Aorta (tissue), 5 donors: ENCODE measurements at regions of chr6 and their contacts with region 1.

Region 1: DNA sequence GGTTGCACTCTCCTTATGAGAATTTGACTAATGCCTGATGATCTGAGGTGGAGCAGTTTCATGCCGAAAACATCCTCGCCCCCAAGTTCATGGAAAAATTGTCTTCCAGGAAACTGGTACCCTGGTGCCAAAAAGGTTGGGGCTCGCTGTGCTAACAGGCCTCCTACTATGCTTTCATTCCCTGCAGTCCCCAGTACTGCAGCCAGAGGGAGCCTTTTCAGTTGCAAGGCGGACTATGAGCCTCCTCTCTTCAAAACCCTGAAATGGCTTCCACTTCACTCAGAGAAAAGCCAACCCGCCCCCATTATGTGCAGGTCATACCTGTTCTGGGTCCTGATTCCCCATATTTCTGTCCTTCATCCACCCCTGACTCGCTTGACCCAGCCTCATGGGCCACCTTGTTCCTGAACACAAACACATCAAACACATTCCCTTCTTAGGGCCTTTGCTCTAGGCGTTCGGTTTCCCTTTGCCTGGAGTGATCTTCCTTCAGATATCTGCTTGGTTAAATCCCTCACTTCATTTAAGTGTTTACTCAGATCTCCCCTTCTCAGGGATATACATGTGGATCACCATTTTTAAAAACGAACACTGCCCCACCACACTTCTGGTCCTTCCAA is 173.7 kb downstream of the PHACTR1 start:
- DNase-seq: no peak
- ATAC-seq: no peak
- H3K4me3 ChIP-seq: no peak overlapping the region
- H3K27ac ChIP-seq: no peak overlapping the region
- H3K4me1 ChIP-seq: no peaks in the 10 kb centered on the region
- H3K27me3 ChIP-seq: peaks cover 0 to 3% of the 10 kb centered on the region in 2 donors

Region 2: GRCh38 chr6:12637960-12638641 is 252.2 kb before region 1 on chr6:
- intact Hi-C with region 1: loop called (anchors 5 kb)
- DNase-seq: peak; percentile 56 to 76
- ATAC-seq: no peak
- H3K4me3 ChIP-seq: no peak overlapping the region
- H3K27ac ChIP-seq: no peak overlapping the region
- H3K4me1 ChIP-seq: no peaks in the 10 kb centered on the region
- H3K27me3 ChIP-seq: no peaks in the 10 kb centered on the region

Region 3: DNA sequence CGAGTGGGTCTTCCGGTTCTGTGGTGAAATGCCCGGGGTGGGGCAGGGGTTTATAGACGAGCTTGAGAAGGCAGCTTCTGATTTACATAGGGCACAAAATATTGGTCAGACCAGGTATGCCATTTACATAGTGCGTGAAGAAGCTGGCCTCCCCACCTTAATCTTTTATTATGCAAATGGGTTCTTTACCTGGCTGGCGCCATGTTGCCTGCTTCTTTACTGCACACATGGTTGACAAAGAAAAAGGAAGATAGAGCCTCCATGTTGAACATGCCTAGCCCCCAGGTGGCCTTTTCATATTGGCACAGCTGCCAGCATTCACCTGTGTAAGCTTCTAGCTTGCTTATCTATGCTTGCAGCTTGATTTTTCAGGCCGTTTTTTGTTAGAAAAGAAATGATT is 102.5 kb after region 1 on chr6:
- intact Hi-C with region 1: no loop called
- DNase-seq: no peak
- ATAC-seq: no peak
- H3K4me3 ChIP-seq: no peak overlapping the region
- H3K27ac ChIP-seq: no peak overlapping the region
- H3K4me1 ChIP-seq: peaks cover 0 to 2% of the 10 kb centered on the region in 2 donors
- H3K27me3 ChIP-seq: no peaks in the 10 kb centered on the region